Natural killer cell (primary cell): ENCODE measurements at regions of chr14 and their contacts with region 1.

Region 1: DNA sequence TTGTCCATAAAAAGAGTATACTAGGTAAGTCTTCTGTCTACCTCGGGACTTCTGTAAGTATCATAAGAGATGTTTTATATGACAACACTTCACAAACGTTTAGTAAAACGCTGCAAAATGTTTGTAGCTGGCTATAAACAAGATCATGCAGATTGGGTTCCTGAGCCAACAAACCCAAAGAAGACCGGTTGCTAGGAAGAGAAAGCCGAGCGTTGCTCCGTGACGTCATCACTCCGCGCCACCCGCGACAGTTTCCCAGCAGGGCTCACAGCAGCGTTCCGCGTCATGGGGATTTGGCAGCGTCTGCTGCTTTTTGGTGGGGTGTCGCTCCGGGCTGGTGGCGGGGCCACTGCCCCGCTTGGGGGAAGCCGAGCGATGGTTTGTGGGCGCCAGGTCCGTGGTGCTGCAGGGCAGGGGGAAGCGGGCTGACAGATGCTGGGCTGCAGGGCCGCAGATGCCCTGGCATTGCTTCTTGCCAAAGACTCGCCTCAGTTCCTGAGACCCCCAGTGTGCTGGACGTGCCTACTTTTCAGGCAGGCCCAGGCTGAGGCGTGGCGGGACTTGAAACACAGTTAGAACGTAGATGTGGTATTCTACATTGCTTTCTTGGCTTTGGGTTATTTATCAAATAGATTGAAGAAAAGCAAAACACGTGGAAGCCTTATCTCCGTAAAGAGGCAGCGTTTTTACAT is at the start of gene NUBPL:
- DNase-seq: peak; percentile 98 to 99
- ATAC-seq: peak; percentile 94 to 95 (median 94)
- H3K4me3 ChIP-seq: peak within 1 kb of the TSS; percentile 90
- H3K4me3 Mint-ChIP-seq: peak within 1 kb of the TSS; percentile 96
- H3K27ac ChIP-seq: peak within 1 kb of the TSS; percentile 78
- H3K27ac Mint-ChIP-seq: peak within 1 kb of the TSS; percentile 97 to 99
- H3K4me1 ChIP-seq: no peaks in the 10 kb centered on the region
- H3K4me1 Mint-ChIP-seq: peaks cover 18 to 19% of the 10 kb centered on the region in 2 donors
- H3K27me3 ChIP-seq: no peaks in the 10 kb centered on the region
- H3K27me3 Mint-ChIP-seq: peaks cover 18 to 25% of the 10 kb centered on the region in 2 donors
- CTCF ChIP-seq: no peak
- total RNA-seq, gene NUBPL: 7.1 to 8.5 (median 7.5) TPM

Region 2: DNA sequence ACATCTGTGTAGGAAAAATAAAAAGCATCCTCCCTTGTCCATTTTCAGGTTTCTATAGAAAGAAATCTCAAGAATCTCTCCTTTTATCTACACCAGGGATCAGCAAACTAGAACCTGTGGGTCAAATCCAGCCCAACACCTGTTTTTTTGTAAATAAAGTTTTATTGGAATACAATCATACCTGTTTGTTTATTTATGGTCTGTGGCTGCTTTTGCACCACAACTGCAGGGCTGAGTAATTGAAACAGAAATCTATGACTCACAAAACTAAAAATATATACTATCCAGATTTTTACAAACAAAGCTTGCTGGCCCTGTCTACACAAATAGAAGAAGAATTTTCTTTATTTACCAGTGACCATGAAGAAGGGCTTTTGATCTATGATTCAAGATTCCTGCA is 782.1 kb before region 1 on chr14:
- intact Hi-C with region 1: no loop called
- DNase-seq: no peak
- ATAC-seq: no peak
- H3K4me3 ChIP-seq: no peak overlapping the region
- H3K4me3 Mint-ChIP-seq: no peak overlapping the region
- H3K27ac ChIP-seq: no peak overlapping the region
- H3K27ac Mint-ChIP-seq: no peak overlapping the region
- H3K4me1 ChIP-seq: no peaks in the 10 kb centered on the region
- H3K4me1 Mint-ChIP-seq: no peaks in the 10 kb centered on the region
- H3K27me3 ChIP-seq: no peaks in the 10 kb centered on the region
- H3K27me3 Mint-ChIP-seq: peaks cover 7 to 21% of the 10 kb centered on the region in 2 donors
- CTCF ChIP-seq: no peak

Region 3: GRCh38 chr14:31026395-31027118 is 534.7 kb before region 1 on chr14:
- intact Hi-C with region 1: loop called (anchors 10 kb)
- DNase-seq: peak; percentile 89 to 95
- ATAC-seq: peak; percentile 92 to 99 (median 95)
- H3K4me3 ChIP-seq: peak overlapping the region; percentile 60
- H3K4me3 Mint-ChIP-seq: peak overlapping the region; percentile 95
- H3K27ac ChIP-seq: peak overlapping the region; percentile 92
- H3K27ac Mint-ChIP-seq: peak overlapping the region; percentile 95 to 96
- H3K4me1 ChIP-seq: peaks cover 6% of the 10 kb centered on the region
- H3K4me1 Mint-ChIP-seq: peaks cover 31 to 36% of the 10 kb centered on the region in 2 donors
- H3K27me3 ChIP-seq: no peaks in the 10 kb centered on the region
- H3K27me3 Mint-ChIP-seq: no peaks in the 10 kb centered on the region
- CTCF ChIP-seq: no peak

Region 4: DNA sequence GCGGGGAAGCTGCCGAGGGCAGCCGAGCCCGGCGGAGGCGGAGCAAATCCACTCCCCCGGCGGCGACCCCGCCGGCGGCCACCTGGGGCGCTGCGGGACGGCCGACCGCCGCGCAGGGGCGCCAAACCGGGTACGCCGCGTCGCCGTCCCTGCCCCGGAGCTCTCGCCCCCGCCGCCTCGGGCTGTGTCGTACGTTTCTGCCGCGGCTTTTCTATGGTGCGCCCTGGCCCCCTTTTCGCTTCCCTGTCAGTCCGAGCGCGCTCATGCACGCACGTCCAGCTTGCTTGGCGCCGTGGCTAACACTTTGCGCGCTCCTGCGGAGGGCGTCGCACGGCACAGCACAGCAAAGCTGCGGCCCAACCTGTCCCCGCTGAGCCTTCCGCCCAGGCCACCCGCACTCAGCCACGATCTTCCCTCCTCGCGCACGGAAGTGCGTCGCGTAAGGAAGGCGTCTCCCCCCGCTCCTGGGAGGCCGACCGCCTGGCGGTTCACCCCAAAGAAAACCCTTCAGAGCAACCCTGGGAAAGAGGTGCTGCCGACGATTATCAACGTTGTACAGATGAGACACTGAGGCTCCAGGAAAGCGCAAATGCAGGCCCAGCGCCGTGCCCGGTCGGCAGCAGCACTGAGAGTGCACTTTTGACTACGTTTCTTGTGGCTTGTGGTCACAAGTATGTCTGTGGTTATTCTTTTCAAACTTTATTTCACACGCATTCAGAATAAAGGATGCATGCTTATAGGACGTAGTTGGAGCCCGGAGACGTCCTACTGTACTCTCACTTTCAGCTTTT is 353.4 kb before region 1 on chr14 and contains the start of gene HECTD1:
- intact Hi-C with region 1: loop called (anchors 5 kb)
- DNase-seq: peak; percentile 86 to 95
- ATAC-seq: peak; percentile 74 to 85 (median 76)
- H3K4me3 ChIP-seq: peak within 1 kb of the TSS; percentile 90
- H3K4me3 Mint-ChIP-seq: peak within 1 kb of the TSS; percentile 94
- H3K27ac ChIP-seq: peak within 1 kb of the TSS; percentile 100
- H3K27ac Mint-ChIP-seq: peak within 1 kb of the TSS; percentile 99
- H3K4me1 ChIP-seq: peaks cover 26% of the 10 kb centered on the region
- H3K4me1 Mint-ChIP-seq: peaks cover 41 to 53% of the 10 kb centered on the region in 2 donors
- H3K27me3 ChIP-seq: no peaks in the 10 kb centered on the region
- H3K27me3 Mint-ChIP-seq: no peaks in the 10 kb centered on the region
- CTCF ChIP-seq: peak; percentile 81
- total RNA-seq, gene HECTD1: 162 to 202 (median 179) TPM

Region 5: GRCh38 chr14:31456841-31457664 is 104.2 kb before region 1 on chr14 and contains the start of gene DTD2:
- intact Hi-C with region 1: loop called (anchors 1 kb)
- DNase-seq: peak; percentile 87 to 96
- ATAC-seq: peak; percentile 97 to 100 (median 98)
- H3K4me3 ChIP-seq: peak within 1 kb of the TSS; percentile 99
- H3K4me3 Mint-ChIP-seq: peak within 1 kb of the TSS; percentile 94
- H3K27ac ChIP-seq: peak within 1 kb of the TSS; percentile 86
- H3K27ac Mint-ChIP-seq: peak within 1 kb of the TSS; percentile 87 to 91
- H3K4me1 ChIP-seq: peaks cover 10% of the 10 kb centered on the region
- H3K4me1 Mint-ChIP-seq: peaks cover 29 to 32% of the 10 kb centered on the region in 2 donors
- H3K27me3 ChIP-seq: peaks cover 4% of the 10 kb centered on the region
- H3K27me3 Mint-ChIP-seq: peaks cover 7 to 11% of the 10 kb centered on the region in 2 donors
- CTCF ChIP-seq: no peak
- total RNA-seq, gene DTD2: 6.6 to 11.9 (median 7.4) TPM

Region 6: GRCh38 chr14:32202998-32203882 is 641.9 kb after region 1 on chr14 and contains the start of gene RNU6-8:
- intact Hi-C with region 1: loop called (anchors 5 kb)
- DNase-seq: peak; percentile 43 to 91
- ATAC-seq: peak; percentile 83 to 87 (median 87)
- H3K4me3 ChIP-seq: peak within 1 kb of the TSS; percentile 87
- H3K4me3 Mint-ChIP-seq: peak within 1 kb of the TSS; percentile 89
- H3K27ac ChIP-seq: peak within 1 kb of the TSS; percentile 97
- H3K27ac Mint-ChIP-seq: peak within 1 kb of the TSS; percentile 89 to 92
- H3K4me1 ChIP-seq: peaks cover 25% of the 10 kb centered on the region
- H3K4me1 Mint-ChIP-seq: peaks cover 36 to 41% of the 10 kb centered on the region in 2 donors
- H3K27me3 ChIP-seq: no peaks in the 10 kb centered on the region
- H3K27me3 Mint-ChIP-seq: peaks cover 19 to 20% of the 10 kb centered on the region in 2 donors
- CTCF ChIP-seq: no peak
- total RNA-seq, gene RNU6-8: not detected